Lower lobe of right lung (tissue), 2 donors: ENCODE measurements at regions of chr13 and their contacts with region 1.

Region 1: DNA sequence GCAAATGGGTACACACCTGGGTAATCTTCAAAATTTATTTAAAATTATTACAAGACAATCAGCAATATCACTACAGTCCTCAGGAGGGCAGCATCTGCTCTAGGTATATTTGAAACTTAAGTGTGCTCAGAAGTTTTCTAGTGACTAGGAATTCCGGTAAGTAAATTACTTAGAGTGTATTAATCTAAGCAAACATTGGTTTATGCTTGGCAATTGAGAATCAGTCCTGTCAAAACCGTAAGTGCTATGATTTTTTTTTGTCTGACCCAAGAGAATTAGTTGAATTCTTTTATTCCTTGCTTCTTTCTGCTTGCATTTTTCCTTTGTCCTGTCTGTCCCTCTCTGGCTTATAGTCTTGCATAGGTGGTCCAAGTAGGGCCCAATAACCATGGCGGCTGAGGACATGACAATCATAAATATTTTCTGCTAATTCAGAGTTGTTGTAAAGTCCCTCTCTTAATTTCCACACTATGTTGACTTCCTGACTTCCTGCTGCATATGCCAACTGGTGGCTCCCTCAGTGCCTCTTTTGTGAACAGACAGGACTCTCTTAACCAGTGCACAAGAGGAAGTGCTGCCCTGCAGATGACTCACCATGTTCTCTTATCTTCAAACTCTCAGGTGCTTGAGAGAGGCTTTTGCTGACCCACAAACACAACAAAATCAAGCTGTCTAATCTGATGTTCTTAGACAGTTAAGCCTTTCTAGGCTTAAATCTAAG is 82.2 kb downstream of the SLAIN1 start:
- DNase-seq: peak; percentile 43
- ATAC-seq: peak; percentile 88 to 94
- H3K4me3 ChIP-seq: no peak overlapping the region
- H3K27ac ChIP-seq: peak overlapping the region; percentile 14
- H3K4me1 ChIP-seq: peaks cover 9% of the 10 kb centered on the region
- H3K27me3 ChIP-seq: no peaks in the 10 kb centered on the region
- CTCF ChIP-seq: peak; percentile 73

Region 2: DNA sequence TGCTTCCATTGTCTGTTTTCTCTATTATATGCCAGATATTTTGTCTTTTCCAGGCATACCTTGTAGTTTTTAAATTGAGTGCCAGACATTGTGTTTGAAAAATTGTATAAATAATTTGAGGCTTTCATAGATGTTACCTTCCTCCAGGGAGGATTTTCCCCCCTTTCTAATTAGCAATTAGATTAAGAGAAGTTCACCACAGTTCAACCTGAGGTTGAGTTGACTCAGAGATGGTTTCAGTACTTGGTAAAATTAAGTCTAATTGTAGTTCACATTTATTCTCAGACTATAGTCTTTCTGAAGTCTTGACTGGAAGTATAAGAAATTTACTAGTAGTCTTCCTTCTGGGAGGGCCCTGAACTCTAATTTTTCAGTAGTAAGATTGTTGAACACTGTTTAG is 348.3 kb before region 1 on chr13:
- intact Hi-C with region 1: no loop called
- DNase-seq: no peak
- ATAC-seq: no peak
- H3K4me3 ChIP-seq: no peak overlapping the region
- H3K27ac ChIP-seq: no peak overlapping the region
- H3K4me1 ChIP-seq: no peaks in the 10 kb centered on the region
- H3K27me3 ChIP-seq: no peaks in the 10 kb centered on the region
- CTCF ChIP-seq: no peak

Region 3: GRCh38 chr13:77584106-77584505 is 195.6 kb before region 1 on chr13:
- intact Hi-C with region 1: no loop called
- DNase-seq: no peak
- ATAC-seq: no peak
- H3K4me3 ChIP-seq: no peak overlapping the region
- H3K27ac ChIP-seq: no peak overlapping the region
- H3K4me1 ChIP-seq: no peaks in the 10 kb centered on the region
- H3K27me3 ChIP-seq: no peaks in the 10 kb centered on the region
- CTCF ChIP-seq: no peak

Region 4: DNA sequence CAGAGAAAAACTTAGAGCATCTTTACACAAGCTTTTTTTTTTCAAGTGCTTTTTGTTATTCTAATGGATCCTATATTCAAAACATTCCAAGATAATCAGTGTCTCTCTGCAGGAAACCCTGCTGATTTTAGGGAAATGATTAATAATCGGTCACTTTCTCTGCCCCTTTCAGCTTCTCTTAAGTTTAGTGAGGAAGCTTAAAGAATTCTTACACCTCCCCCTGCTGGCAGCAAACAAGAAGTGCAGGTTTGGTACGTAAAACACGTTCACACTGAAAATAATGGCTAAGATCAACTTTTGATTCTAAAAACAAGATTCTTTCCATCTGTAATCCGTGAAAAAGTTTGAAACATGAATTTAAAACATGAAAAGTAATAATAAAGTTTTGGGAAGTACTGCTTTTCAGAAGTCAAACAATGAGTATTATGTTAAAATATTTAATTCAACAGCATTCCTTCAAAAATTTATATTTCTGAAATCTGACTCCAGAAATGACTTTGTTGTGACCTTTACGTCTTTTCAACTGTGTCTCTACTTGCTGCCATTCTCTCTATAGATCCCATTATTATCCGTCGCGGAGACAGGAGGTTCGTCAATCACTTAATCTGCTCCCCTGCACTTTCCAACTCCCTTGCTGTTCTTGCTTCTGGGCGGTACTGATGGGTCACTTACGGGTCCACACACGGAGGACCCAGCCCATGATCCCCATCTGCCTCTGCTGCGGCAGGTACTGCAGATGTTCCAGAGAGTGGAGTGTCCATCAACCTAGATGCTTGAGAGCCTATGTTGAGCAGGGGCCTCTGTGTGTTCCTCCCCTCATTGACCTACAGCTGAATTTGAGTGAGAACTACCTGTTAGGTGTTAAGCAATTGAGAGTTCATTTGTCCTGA is 342.0 kb after region 1 on chr13:
- intact Hi-C with region 1: loop called (anchors 5 kb)
- DNase-seq: no peak
- ATAC-seq: peak; percentile 53 to 74
- H3K4me3 ChIP-seq: no peak overlapping the region
- H3K27ac ChIP-seq: no peak overlapping the region
- H3K4me1 ChIP-seq: no peaks in the 10 kb centered on the region
- H3K27me3 ChIP-seq: no peaks in the 10 kb centered on the region
- CTCF ChIP-seq: peak; percentile 88